ENCODE measurements at regions of chr11 and their contacts with region 1.

Region 1: DNA sequence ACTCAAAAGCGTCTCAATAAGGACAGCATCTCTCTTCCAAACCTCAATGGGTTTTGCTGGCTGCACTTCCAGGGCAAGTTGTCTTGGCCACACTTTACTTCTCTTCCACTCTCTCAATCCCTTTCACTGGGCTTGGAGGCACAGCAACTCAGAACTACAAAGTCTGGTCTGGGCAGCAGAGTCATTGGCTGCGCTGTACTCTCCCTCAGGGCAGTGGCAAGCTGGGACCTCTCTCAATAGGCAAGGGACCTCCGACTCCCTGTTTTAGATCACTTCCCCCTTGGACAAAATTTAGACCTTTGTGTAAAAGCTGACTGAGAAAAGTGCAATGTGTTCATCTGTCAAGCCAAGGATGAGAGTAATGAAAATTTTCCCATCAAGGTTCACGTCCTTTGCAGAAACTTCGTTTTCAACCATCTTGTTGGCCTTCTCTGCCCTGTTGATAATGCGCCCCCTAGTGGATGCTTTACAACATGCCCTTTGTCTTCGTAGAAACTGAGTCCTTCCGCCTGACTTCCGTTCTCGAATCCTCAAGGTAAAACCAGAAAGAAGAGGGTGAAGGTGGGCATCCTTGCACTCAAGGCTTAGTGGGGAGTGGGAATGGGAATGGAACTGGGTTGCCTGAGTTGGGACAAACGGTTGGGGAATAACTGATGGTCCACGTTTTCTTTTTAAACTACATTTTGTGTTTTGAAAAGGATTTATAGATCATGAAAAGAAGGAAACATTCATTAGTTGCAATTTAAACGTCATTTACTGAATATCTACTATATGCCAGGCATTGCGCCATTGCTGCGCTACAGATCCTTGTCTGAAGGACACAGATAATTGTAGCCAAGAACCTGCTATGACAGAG is 99.1 kb downstream of the CD44 start:
- DNase-seq: peak; percentile 50 to 64 (median 55)
- H3K4me3 ChIP-seq: no peak overlapping the region
- H3K4me3 Mint-ChIP-seq: peak overlapping the region in 6 of 8 donors; percentile 4 to 66 (median 38)
- H3K27ac ChIP-seq: no peak overlapping the region
- H3K27ac Mint-ChIP-seq: peak overlapping the region; percentile 78 to 97 (median 90)
- H3K4me1 ChIP-seq: peaks cover 73% of the 10 kb centered on the region
- H3K4me1 Mint-ChIP-seq: peaks cover 61 to 94% (median 76%) of the 10 kb centered on the region in 4 donors
- H3K27me3 ChIP-seq: no peaks in the 10 kb centered on the region
- H3K27me3 Mint-ChIP-seq: no peaks in the 10 kb centered on the region

Region 2: DNA sequence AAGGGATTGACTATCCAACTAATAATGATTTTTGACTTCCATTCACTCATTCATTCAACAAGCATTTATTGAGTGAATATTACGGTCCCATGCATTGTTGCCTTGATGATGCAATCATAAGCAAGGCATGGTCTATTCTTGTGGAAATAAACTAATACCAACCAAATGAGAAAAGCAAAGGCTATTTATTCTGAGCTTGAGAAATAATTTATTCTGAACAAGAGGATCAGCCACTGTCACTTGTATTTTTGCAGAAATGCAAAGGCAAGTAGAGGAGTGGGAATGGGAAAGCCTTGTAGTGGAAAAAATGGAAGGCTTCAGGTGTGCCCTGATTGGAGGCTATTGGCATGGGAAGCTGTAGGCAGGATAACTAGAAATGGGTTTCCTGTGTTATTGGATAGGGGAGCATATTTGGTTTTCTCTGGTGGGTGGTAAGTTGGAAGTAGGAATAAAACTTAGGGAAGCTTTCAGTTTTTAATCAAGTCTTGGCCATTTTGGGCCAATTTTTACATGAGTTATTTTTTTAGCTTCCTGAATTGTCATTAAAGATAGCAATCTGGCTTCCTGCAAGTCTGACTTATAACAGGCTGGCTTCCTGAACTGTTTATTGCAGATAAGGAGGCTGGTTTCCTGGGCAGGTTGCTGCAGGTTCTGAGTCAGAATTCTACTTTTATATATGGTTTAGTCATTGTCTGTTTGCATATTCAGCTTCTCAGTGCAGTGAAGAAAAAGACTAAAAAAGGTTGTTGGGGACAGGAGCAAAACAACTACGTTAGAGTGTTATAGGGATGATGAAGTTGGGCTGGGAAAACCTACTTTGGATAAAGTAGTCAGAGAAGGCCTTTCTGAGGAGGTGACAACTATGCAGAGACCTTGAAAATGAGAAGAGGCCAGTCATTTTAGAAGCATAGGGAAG is 428.6 kb before region 1 on chr11:
- CTCF ChIA-PET with region 1: no interaction called
- POLR2A ChIA-PET with region 1: no interaction called
- intact Hi-C with region 1: no loop called
- DNase-seq: no peak
- H3K4me3 ChIP-seq: no peak overlapping the region
- H3K4me3 Mint-ChIP-seq: no peak overlapping the region
- H3K27ac ChIP-seq: no peak overlapping the region
- H3K27ac Mint-ChIP-seq: no peak overlapping the region
- H3K4me1 ChIP-seq: no peaks in the 10 kb centered on the region
- H3K4me1 Mint-ChIP-seq: peaks cover 0 to 10% (median under 1%) of the 10 kb centered on the region in 4 donors
- H3K27me3 ChIP-seq: no peaks in the 10 kb centered on the region
- H3K27me3 Mint-ChIP-seq: peaks cover 13 to 29% of the 10 kb centered on the region in 2 donors

Region 3: DNA sequence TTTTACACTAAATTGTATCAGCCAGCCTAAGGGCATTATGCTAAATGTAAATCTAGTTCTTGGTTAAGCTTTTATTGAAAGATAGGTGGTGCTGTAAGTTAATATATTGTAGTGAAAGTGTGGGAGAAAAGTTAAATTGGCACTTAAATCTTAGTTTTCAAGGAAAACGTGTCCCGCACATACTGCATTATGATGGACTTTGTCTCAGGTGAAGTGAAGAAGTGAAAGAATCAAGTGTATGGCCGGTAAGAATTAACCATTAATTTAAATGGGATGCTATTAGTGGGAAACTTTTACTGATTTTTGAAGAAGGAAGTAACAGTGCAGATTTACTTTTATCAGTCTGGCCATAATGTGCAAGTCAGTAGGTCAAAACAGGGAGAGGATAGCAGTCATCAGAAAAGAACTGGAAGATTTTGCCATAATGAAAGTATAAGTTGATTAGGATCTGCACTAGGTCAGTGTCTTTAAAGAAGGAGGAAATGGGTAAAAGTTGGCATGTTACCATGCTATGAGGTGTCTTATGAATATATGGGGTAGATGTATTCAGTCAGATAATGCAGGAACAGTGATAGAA is 240.0 kb before region 1 on chr11:
- CTCF ChIA-PET with region 1: interaction called, 17 read pairs
- POLR2A ChIA-PET with region 1: interaction called, 4 read pairs
- intact Hi-C with region 1: loop called (anchors 1 kb)
- DNase-seq: peak in 4 of 5 donors; percentile 37 to 48 (median 44)
- H3K4me3 ChIP-seq: no peak overlapping the region
- H3K4me3 Mint-ChIP-seq: peak overlapping the region in 6 of 8 donors; percentile 62 to 78 (median 75)
- H3K27ac ChIP-seq: peak overlapping the region; percentile 45
- H3K27ac Mint-ChIP-seq: peak overlapping the region; percentile 57 to 95 (median 86)
- H3K4me1 ChIP-seq: peaks cover 24% of the 10 kb centered on the region
- H3K4me1 Mint-ChIP-seq: peaks cover 20 to 34% (median 24%) of the 10 kb centered on the region in 4 donors
- H3K27me3 ChIP-seq: no peaks in the 10 kb centered on the region
- H3K27me3 Mint-ChIP-seq: no peaks in the 10 kb centered on the region

Region 4: DNA sequence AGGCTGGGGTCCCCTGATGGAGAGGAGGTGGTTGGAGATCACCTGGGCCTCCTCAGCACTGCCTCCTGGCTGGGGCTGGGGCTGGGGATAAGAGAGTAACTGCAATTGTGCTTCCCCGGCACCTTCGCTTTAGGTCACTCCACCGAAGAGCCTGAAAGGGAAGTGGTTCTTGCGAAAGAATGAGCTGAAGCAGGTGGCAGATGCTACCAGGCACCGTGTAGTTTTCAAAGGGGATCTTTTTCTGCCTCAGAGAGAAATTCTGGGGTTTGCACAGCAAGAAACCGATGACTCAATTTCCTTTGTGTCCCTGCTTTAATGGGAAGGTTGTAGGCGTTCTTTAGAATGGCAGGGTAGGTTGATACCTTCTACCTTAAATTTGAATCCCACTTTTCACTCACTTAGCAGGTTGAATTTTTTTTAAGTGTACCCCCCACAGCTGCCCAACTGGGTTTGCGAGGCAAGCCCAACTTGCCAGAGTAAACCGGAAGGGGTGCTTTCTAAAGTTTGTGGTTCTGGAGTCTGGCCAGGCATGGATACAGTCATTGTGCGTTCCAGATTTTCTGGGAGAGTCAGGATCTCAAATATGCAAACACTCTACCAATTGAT is 93.8 kb before region 1 on chr11:
- CTCF ChIA-PET with region 1: interaction called, 7 read pairs
- POLR2A ChIA-PET with region 1: interaction called, 15 read pairs
- intact Hi-C with region 1: loop called (anchors 2 kb)
- DNase-seq: peak; percentile 67 to 90 (median 76)
- H3K4me3 ChIP-seq: peak overlapping the region; percentile 55 to 59
- H3K4me3 Mint-ChIP-seq: peak overlapping the region; percentile 83 to 99 (median 98)
- H3K27ac ChIP-seq: peak overlapping the region; percentile 73
- H3K27ac Mint-ChIP-seq: peak overlapping the region; percentile 93 to 100 (median 95)
- H3K4me1 ChIP-seq: peaks cover 72% of the 10 kb centered on the region
- H3K4me1 Mint-ChIP-seq: peaks cover 60 to 88% (median 70%) of the 10 kb centered on the region in 4 donors
- H3K27me3 ChIP-seq: no peaks in the 10 kb centered on the region
- H3K27me3 Mint-ChIP-seq: no peaks in the 10 kb centered on the region

Region 5: DNA sequence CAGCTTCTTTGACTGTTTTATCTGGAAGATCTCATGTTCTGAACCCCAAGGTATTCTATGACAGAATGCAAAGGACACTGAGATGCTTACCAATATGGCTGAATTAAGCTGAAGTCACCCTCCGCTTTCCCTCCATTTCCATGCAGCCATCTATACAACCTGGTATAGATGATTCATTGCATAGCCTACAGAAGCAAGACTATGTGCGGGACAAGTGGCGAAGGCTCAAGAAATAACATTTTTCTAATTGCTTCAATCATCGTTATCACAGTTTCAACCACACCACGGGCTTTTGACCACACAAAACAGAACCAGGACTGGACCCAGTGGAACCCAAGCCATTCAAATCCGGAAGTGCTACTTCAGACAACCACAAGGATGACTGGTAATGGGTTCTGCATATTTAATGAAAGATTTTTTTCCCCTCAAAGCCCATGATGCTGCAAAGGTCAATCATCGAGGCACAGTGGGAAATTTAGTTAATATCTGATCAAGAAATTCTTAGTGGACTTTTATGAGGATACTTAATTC is 37.2 kb before region 1 on chr11:
- CTCF ChIA-PET with region 1: interaction called, 3 read pairs
- POLR2A ChIA-PET with region 1: no interaction called
- intact Hi-C with region 1: loop called (anchors 5 kb)
- DNase-seq: no peak
- H3K4me3 ChIP-seq: no peak overlapping the region
- H3K4me3 Mint-ChIP-seq: no peak overlapping the region
- H3K27ac ChIP-seq: no peak overlapping the region
- H3K27ac Mint-ChIP-seq: peak overlapping the region in 4 of 7 donors; percentile 17 to 77 (median 34)
- H3K4me1 ChIP-seq: peaks cover 46% of the 10 kb centered on the region
- H3K4me1 Mint-ChIP-seq: peaks cover 45 to 89% (median 69%) of the 10 kb centered on the region in 4 donors
- H3K27me3 ChIP-seq: no peaks in the 10 kb centered on the region
- H3K27me3 Mint-ChIP-seq: no peaks in the 10 kb centered on the region

Region 6: GRCh38 chr11:35227576-35228327 is 10.3 kb before region 1 on chr11:
- CTCF ChIA-PET with region 1: interaction called, 8 read pairs
- POLR2A ChIA-PET with region 1: interaction called, 16 read pairs
- intact Hi-C with region 1: no loop called
- DNase-seq: no peak
- H3K4me3 ChIP-seq: no peak overlapping the region
- H3K4me3 Mint-ChIP-seq: no peak overlapping the region
- H3K27ac ChIP-seq: no peak overlapping the region
- H3K27ac Mint-ChIP-seq: peak overlapping the region; percentile 1 to 84 (median 60)
- H3K4me1 ChIP-seq: peaks cover under 1% of the 10 kb centered on the region
- H3K4me1 Mint-ChIP-seq: peaks cover 8 to 30% (median 25%) of the 10 kb centered on the region in 4 donors
- H3K27me3 ChIP-seq: no peaks in the 10 kb centered on the region
- H3K27me3 Mint-ChIP-seq: no peaks in the 10 kb centered on the region